HEK293 (cell line): ENCODE measurements at regions of chr15 and their contacts with region 1.

Region 1: DNA sequence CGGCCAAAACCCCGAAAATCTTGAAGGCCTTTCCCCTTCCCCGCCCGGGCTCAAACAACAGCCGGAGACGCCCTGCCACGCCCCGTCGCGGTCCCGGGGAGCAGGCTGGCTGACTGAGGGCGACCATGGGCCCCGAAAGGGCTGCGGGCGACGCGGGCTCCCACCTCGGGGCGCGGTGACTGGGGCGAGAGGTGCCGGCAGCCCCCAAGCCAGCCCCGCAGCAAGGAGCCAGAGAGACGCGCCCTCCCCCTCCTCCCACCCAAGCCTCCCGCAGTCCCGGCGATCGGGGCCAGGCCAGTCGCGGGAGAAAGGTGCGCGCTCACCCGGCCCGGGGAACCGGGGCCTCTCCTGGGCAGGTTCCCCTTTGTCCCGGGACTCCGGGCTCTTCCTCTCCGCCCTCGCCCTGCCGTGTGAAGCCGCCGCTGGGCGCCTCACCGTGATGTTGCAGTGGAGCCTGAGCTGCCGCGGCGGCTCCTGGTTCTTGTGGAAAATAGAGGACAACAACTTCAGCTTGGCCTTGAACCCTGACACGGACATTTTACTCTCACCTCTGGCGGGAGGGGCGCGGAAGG is 30.6 kb upstream of the ZSCAN2 start:
- H3K4me3 ChIP-seq: peak overlapping the region; percentile 82
- H3K27ac ChIP-seq: peak overlapping the region; percentile 92
- H3K4me1 ChIP-seq: peaks cover 9% of the 10 kb centered on the region
- CTCF ChIP-seq: no peak

Region 2: DNA sequence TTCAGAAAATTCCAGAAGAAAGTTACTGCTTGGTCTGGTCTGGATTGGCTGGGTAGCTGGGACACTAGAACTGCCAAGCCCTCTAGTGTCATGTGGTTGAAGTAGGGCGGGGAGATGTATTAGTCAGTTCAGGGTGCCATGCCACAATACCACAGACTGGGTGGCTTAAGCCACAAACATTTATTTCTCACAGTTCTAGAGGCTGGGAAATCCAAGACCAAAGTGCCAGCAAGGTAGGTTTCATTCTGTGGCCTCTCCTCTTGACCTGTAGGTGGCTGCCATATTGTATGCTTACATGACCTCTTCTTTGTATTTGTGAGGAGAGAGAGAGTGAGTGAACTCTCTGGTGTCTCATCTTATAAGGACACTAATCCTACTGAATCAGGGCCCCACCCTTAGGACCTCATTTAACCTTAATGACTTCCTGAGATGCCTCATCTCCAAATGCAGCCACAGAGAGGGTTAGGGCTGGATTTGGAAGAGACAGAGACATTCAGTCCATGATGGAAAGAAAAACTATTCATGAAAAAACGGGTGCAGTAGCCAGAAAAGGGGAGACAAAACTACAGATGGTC is 12.4 kb after region 1 on chr15:
- CTCF ChIA-PET with region 1: interaction called, 41 read pairs
- POLR2A ChIA-PET with region 1: interaction called, 7 read pairs
- H3K4me3 ChIP-seq: no peak overlapping the region
- H3K27ac ChIP-seq: no peak overlapping the region
- H3K4me1 ChIP-seq: no peaks in the 10 kb centered on the region
- CTCF ChIP-seq: no peak

Region 3: GRCh38 chr15:84588053-84588874 is 18.0 kb after region 1 on chr15:
- CTCF ChIA-PET with region 1: interaction called, 41 read pairs
- POLR2A ChIA-PET with region 1: interaction called, 4 read pairs
- H3K4me3 ChIP-seq: peak overlapping the region; percentile 26
- H3K27ac ChIP-seq: no peak overlapping the region
- H3K4me1 ChIP-seq: no peaks in the 10 kb centered on the region
- CTCF ChIP-seq: peak; percentile 86